ENCODE measurements at regions of chr2 and their contacts with region 1.

Region 1: GRCh38 chr2:109545828-109546713 is 67.7 kb downstream of the SEPTIN10 start:
- DNase-seq: no peak
- H3K4me3 ChIP-seq: no peak overlapping the region
- CTCF ChIP-seq: peak; percentile 89

Region 2: DNA sequence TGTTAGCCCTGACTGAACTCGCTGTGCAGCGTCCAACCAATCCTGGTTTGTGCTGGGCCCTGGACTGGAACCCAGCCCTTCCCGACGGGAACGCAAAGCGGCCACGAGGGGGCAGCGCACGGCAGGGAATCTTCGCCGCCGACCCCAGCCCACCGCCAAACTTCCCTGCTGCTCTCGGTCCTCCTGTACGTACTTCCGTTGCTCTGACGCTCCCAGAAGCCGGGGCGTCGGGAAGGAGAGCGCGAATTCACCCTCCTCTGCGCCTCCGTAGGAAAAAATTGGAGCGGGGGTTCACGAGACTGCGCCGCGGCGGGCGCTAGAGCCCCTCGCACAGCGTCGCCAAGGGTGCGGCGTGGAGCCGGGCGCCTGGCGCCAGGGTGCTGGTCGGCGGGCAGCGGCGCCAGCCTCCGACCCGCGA is 418.0 kb before region 1 on chr2:
- CTCF ChIA-PET with region 1: interaction called, 10 read pairs
- POLR2A ChIA-PET with region 1: no interaction called
- DNase-seq: peak; percentile 42
- H3K4me3 ChIP-seq: peak overlapping the region; percentile 72
- CTCF ChIP-seq: peak; percentile 98

Region 3: DNA sequence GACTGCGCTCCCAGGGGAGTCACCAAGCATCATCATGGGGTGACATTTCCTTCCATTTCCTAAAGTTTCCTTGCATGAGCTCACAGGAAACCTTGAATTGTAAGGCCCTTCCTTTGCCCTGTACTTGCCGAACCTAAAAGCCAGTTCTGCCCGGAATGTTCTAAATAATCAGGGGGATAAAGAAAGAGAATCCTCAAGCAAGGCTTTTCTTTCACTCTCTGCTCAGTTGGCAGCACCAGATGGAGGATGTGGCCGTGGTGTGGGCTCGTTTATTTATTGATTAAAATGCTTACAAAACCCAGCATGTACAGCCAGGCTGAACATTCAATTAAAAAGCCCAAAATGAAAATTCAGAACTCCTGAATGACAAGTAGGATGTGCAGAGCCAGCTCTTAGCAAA is 246.5 kb before region 1 on chr2:
- CTCF ChIA-PET with region 1: no interaction called
- POLR2A ChIA-PET with region 1: no interaction called
- DNase-seq: no peak
- H3K4me3 ChIP-seq: no peak overlapping the region
- CTCF ChIP-seq: no peak

Region 4: DNA sequence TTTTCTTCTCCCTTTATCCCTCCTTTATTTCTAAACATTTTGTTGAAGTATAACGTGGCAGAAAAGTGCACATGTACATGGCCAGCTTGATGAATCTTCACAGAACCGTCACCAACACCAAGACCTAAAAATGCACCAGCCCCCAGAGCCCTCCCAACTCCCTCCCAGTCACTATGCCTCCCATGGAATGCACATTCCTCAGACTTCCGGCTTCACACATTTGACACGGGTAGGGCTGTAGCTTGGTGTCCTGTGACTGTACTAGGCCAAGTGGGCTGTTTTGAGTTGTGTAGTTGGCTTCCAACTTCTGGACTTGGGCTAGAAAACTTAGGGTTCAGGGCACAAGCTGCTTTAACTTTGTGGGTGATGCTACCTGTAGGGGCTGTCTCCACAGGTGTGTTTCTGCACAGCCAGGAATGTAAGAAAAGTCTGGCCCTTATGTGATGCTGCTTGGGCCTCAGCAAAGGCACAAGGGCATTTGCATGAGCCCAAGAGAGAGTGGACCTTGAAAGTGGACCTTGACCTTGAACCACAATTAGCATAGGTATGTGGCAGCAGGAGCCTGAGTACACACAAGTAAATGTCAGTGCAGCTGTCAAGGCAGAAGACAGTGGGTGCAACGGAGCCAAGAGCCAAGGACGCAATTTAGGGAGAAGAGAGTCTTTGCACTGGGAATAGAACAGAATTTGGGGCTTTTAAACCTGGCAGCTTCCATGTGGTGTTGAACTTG is 10.7 kb before region 1 on chr2:
- CTCF ChIA-PET with region 1: interaction called, 58 read pairs
- POLR2A ChIA-PET with region 1: no interaction called
- DNase-seq: no peak
- H3K4me3 ChIP-seq: no peak overlapping the region
- CTCF ChIP-seq: no peak

Region 5: GRCh38 chr2:109582928-109583895 is 37.1 kb after region 1 on chr2:
- CTCF ChIA-PET with region 1: interaction called, 14 read pairs
- POLR2A ChIA-PET with region 1: no interaction called
- DNase-seq: no peak
- H3K4me3 ChIP-seq: no peak overlapping the region
- CTCF ChIP-seq: no peak

Region 6: GRCh38 chr2:109607766-109608165 is 61.7 kb after region 1 on chr2:
- CTCF ChIA-PET with region 1: interaction called, 13 read pairs
- POLR2A ChIA-PET with region 1: no interaction called
- DNase-seq: no peak
- H3K4me3 ChIP-seq: no peak overlapping the region
- CTCF ChIP-seq: no peak

Region 7: GRCh38 chr2:109715313-109715805 is 169.3 kb after region 1 on chr2:
- CTCF ChIA-PET with region 1: interaction called, 308 read pairs
- POLR2A ChIA-PET with region 1: no interaction called
- DNase-seq: no peak
- H3K4me3 ChIP-seq: no peak overlapping the region
- CTCF ChIP-seq: peak; percentile 36